Right ventricle myocardium inferior (tissue), 1 donor: ENCODE measurements at regions of chr22 and their contacts with region 1.

Region 1: GRCh38 chr22:17920145-17920605 is 104.2 kb downstream of the MICAL3 start:
- DNase-seq: peak; percentile 76
- ATAC-seq: peak; percentile 82

Region 2: GRCh38 chr22:17988800-17989513 is 68.8 kb after region 1 on chr22:
- intact Hi-C with region 1: loop called (anchors 5 kb)
- DNase-seq: no peak
- ATAC-seq: peak; percentile 57